ENCODE measurements at regions of chr11 and their contacts with region 1.

Region 1: GRCh38 chr11:17063171-17064002 is 14.1 kb downstream of the RPS13 start:
- DNase-seq: peak; percentile 71

Region 2: DNA sequence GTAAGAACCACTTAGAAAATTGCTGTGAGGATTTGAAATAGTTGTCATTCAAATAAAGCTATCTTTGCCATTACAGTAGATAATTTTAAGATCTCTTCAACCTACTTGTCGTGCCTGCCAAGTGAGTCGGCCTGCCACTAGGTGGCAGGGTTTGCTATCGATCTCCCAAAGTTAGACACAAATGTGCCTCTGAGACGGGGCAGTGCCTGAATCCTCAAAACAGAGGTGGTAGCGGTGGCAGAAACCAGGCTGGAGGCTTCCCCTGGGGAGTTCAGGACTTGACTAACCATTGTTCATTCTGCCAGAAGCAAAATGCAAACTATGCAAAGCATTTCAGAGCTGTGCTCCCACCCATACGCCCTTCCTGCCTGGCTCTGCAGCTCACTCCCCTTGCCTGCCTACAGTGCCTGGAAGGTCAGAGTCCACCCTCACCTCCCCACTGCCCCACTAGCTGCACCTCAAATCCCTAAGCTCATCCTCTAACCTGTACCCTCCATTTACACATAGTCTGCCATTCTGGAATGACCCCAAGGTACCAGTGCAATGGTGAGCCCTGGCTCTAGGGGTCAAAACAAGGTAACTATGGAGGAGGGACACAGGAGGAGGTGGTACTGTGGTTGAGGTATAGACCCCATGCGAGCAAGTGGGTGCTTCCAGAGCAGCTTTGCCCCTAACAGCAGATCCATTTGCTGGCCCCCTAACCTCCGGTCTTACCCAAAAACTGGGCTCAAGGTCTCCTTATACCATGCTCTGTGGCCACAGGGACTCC is 242.9 kb before region 1 on chr11:
- CTCF ChIA-PET with region 1: interaction called, 12 read pairs
- POLR2A ChIA-PET with region 1: no interaction called
- DNase-seq: peak; percentile 78

Measured in HEK293T (cell line).